ENCODE measurements at regions of chr7 and their contacts with region 1.

Region 1: GRCh38 chr7:140003913-140004382 is 58.8 kb downstream of the PARP12 start:
- DNase-seq: no peak
- H3K4me3 ChIP-seq: no peak overlapping the region
- H3K27ac ChIP-seq: peak overlapping the region in 2 of 59 donors; percentile 13 to 21
- H3K27me3 ChIP-seq: no peaks in the 10 kb centered on the region
- CTCF ChIP-seq: peak in 55 of 56 donors; percentile 8 to 68 (median 42)

Region 2: DNA sequence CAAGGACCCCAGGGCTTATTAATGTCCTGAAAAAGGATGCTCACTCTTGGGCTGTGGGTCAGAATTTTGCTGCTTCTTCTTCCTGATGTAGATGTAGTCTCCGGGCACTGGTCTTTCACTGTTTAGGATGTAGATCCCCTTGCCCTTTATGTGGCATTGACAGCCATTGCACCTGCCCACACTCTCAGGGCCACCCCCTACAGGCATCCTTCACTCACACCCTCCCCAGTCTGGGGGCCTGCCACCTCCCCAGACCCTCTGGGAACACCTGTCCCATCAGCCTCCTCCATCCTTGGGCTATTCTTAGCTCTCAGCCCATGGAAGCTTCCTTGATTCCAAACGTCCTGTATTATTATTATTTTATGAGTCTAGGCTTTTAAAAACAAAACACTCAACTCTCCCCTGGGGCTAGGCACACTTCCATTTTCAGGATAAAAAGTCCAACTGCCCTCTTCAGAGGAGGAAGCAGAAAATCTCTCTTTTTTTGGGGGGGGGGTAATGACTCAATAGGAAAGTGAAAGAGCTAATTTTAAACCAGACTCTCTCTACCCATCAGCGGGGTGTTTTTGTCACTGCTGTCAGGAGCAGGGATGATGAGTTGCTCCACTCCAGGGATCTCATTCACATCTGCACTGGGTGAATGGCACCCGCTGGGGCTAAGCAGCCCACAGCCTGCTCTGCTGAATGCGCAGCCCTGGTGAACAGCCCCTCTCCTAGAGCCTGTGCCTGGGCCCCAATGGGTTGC is 508.9 kb before region 1 on chr7:
- intact Hi-C with region 1: loop called (anchors 2 to 5 kb)
- DNase-seq: no peak
- H3K4me3 ChIP-seq: no peak overlapping the region
- H3K27ac ChIP-seq: no peak overlapping the region
- H3K27me3 ChIP-seq: peaks cover 0 to 3% (median 0%) of the 10 kb centered on the region in 45 donors
- CTCF ChIP-seq: no peak

Region 3: DNA sequence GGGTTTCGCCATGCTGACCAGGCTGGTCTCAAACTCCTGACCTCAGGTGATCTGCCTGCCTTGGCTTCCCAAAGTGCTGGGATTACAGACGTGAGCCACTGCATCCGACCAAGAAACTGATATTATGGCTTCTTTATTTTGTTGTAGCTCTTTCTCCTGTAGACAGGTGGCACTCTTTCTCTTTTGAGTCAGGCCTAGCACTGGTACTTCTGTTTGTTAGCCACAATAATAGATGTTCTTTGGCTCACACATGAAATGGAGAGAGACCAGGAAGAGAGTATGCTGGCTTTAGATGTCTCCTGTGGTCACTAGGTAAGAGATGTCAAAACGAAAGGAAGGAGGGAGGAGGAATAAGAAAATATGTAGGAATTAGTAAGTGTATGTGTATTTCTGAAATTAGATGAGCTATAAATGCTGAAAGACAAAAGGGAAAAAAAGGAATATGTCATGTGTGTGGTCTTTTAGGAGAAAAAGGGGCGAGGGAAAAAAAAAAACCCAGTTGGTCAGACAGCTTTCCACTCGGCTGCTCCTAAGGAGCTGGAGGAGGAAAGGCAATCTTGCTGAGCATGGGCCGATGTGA is 401.7 kb before region 1 on chr7:
- intact Hi-C with region 1: loop called in 1 of 2 experiments (anchors 10 kb)
- DNase-seq: no peak
- H3K4me3 ChIP-seq: no peak overlapping the region
- H3K27ac ChIP-seq: peak overlapping the region in 41 of 59 donors; percentile 4 to 78 (median 47)
- H3K27me3 ChIP-seq: no peaks in the 10 kb centered on the region
- CTCF ChIP-seq: peak; percentile 39 to 81 (median 64)

Region 4: GRCh38 chr7:139645572-139646523 is 358.1 kb before region 1 on chr7:
- intact Hi-C with region 1: loop called (anchors 2 kb)
- DNase-seq: peak; percentile 66 to 89 (median 86)
- H3K4me3 ChIP-seq: peak overlapping the region in 3 of 59 donors; percentile 13 to 26 (median 16)
- H3K27ac ChIP-seq: peak overlapping the region in 58 of 59 donors; percentile 35 to 98 (median 92)
- H3K27me3 ChIP-seq: no peaks in the 10 kb centered on the region
- CTCF ChIP-seq: peak; percentile 80 to 97 (median 91)

Region 5: DNA sequence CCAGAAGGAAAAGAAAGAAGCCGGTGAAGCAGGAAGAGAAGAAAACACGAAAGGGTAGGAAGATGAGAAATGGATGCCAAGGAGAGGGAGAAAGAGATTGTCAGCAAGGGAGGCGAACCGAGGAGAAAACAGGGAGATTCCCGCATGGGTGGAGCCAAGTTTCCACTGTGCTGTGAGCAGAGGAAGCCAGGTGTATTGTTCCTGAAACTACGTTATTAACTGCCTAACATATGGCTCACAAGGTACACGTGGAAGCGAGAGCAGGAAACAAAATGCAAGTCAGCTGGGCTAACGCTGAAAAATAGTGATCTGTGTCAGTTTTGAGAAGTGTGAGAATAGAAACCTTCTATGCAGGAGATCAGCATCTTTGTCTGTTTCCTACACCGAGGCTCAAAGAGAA is 205.7 kb before region 1 on chr7:
- intact Hi-C with region 1: loop called in 1 of 2 experiments (anchors 5 kb)
- DNase-seq: no peak
- H3K4me3 ChIP-seq: peak overlapping the region in 4 of 59 donors; percentile 1 to 17 (median 4)
- H3K27ac ChIP-seq: no peak overlapping the region
- H3K27me3 ChIP-seq: no peaks in the 10 kb centered on the region
- CTCF ChIP-seq: no peak

Measured in dorsolateral prefrontal cortex (tissue), 120 donors.